ENCODE measurements at regions of chr10 and their contacts with region 1.

Region 1: DNA sequence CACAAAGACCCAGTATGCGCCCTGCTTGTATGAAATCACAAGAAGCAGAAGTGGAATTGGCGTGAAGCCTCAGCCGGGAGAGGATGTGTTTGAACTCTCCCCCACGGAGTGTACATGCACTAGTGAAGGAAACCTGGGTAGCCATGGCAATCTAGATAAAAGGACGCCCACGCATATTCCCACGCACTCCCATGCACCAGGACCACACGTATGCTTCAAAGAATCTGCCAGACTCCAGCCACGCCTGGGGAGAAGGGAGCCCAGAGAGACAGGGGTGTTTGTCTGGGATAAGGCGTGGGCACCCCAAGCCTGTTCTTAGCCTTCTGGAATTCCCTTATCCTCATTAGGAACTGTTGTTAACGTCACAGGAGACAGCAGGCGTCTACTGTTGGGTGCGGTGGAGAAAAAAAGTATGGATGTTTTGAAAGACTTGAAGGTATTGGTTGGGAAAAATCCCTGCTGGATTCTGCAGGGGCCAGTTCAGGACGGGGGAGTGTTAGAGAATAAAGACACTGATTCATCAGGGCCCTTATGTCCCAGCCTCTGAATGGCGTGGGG is 28.9 kb upstream of the ECHDC3 start:
- DNase-seq: peak; percentile 59
- ATAC-seq: peak; percentile 31
- H3K4me3 ChIP-seq: no peak overlapping the region
- H3K27ac ChIP-seq: no peak overlapping the region; the same call in 1 of the 2 replicates
- H3K4me1 ChIP-seq: peaks cover 42% of the 10 kb centered on the region
- H3K27me3 ChIP-seq: no peaks in the 10 kb centered on the region
- CTCF ChIP-seq: no peak
- EP300 ChIP-seq: 0 out of 4 replicates have a peak, but pooled peaks of 1 of the 2 experiments have one; percentile 10
- POLR2A ChIP-seq: no peak
- RAD21 ChIP-seq: no peak

Region 2: DNA sequence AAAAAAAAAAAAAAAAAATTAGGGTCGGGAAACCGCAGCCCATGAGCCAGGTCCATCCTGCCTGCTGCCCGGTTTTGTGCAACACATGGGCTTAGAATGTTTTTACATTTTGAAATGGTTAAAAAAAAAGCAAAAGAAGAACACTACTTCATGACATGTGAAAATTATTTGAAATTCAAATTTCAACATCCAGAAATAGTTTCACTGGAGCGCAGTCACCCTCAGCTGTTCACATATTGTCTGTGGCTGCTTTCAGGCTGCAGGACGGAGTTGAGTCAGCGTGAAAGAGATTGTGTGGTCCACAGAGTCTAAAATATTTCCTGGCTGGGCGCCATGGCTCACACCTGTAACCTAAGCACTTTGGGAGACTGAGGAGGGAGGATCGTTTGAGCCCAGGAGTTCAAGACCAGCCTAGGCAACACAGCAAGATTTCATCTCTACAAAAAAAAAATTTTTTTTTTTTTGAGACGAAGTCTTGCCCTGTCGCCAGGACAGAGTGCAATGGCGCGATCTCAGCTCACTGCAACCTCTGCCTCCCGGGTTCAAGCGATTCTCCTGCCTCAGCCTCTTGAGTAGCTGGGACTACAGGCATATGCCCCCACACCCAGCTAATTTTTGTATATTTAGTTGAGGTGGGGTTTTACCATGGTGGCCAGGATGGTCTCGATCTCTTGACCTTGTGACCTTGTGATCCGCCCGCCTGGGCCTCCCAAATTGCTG is 35.0 kb before region 1 on chr10:
- CTCF ChIA-PET with region 1: no interaction called
- POLR2A ChIA-PET with region 1: interaction called, 3 read pairs
- RAD21 ChIA-PET with region 1: interaction called, 8 read pairs
- SMC1A ChIA-PET with region 1: interaction called, 3 read pairs
- in situ Hi-C with region 1: no loop called
- intact Hi-C with region 1: loop called (anchors 1 kb)
- DNase-seq: peak; percentile 98
- ATAC-seq: peak; percentile 93
- H3K4me3 ChIP-seq: peak overlapping the region; percentile 48; the same call in 1 of the 2 replicates
- H3K27ac ChIP-seq: peak overlapping the region; percentile 92
- H3K4me1 ChIP-seq: peaks cover 63% of the 10 kb centered on the region
- H3K27me3 ChIP-seq: no peaks in the 10 kb centered on the region
- CTCF ChIP-seq: no peak
- EP300 ChIP-seq: peak; percentile 88 to 94
- POLR2A ChIP-seq: no peak
- RAD21 ChIP-seq: peak; percentile 40